SK-N-SH (cell line): ENCODE measurements at regions of chr4 and their contacts with region 1.

Region 1: GRCh38 chr4:15396157-15396800 is 31.6 kb upstream of the C1QTNF7 start:
- DNase-seq: peak; percentile 33
- H3K4me3 ChIP-seq: no peak overlapping the region; a peak in 1 of 4 replicates
- H3K27ac ChIP-seq: no peak overlapping the region
- H3K4me1 ChIP-seq: peaks cover 11 to 13% of the 10 kb centered on the region in 2 experiments; a peak in 2 of 4 replicates
- H3K27me3 ChIP-seq: no peaks in the 10 kb centered on the region
- CTCF ChIP-seq: peak; percentile 73
- EP300 ChIP-seq: no peak
- RAD21 ChIP-seq: peak; percentile 78

Region 2: DNA sequence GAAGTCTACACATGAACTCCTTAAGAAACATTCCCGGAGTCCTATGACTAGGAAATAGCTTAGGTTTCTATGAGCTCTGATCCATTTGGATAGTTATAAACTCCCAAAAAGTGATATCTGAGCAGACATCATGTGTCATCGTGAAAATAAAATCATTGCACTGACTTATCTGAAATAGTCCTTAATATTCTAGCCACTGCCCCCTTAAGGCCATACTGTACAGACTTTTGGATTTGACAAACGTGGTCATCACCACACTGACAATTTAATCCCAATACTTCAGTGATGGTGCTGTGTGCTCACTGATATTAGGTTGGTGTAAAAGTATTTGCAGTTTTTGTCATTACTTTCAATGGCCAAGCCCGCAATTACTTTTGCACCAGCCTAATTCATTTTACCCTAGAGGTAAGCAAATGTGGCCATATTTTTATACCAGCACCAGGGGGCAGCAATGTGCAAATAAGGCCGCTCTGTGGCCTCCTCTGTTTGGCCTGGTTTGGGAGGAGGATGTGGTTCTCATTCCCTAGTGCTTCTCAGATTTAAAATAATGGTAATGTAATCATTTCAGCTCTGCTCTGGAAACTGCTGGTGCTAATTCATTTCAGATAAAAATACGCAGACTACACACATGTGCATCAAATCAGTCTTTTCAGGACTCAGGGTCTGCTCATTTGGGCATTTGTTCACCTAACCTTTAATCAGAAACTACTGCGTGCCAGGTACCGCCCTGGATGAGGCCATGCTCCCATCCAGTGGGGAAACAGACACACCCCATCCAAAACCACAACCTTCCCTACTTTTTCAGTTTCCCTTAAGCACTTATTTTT is 164.8 kb before region 1 on chr4:
- CTCF ChIA-PET with region 1: interaction called, 34 read pairs
- POLR2A ChIA-PET with region 1: no interaction called
- DNase-seq: peak; percentile 77
- H3K4me3 ChIP-seq: no peak overlapping the region; a peak in 1 of 4 replicates
- H3K27ac ChIP-seq: peak overlapping the region in 1 of 2 experiments; percentile 74; a peak in 2 of 4 replicates
- H3K4me1 ChIP-seq: peaks cover 13 to 26% of the 10 kb centered on the region in 2 experiments
- H3K27me3 ChIP-seq: no peaks in the 10 kb centered on the region
- CTCF ChIP-seq: peak; percentile 86
- EP300 ChIP-seq: no peak; a peak in 1 of 4 replicates
- RAD21 ChIP-seq: peak; percentile 93

Region 3: DNA sequence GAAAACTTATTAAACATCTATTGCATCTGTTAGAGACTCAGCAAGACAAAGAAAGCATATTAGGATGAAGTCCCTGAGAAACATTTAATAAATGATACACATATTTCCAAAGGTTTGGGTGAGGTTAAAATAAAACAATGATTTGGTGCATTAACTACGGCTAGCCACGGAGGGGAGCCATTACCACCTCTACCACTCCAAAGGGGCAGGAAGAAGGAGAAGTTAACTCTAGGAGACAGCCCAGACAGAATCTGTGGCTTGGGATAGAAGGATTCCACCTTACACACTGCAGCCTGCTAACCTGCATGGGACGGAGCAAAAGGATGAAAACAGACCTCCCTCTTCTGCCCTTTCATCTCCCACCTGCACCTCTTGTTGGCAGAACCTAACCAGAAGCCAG is 157.6 kb before region 1 on chr4:
- CTCF ChIA-PET with region 1: interaction called, 34 read pairs
- POLR2A ChIA-PET with region 1: no interaction called
- DNase-seq: peak; percentile 65
- H3K4me3 ChIP-seq: no peak overlapping the region
- H3K27ac ChIP-seq: no peak overlapping the region
- H3K4me1 ChIP-seq: peaks cover 2 to 25% of the 10 kb centered on the region in 2 experiments; a peak in 3 of 4 replicates
- H3K27me3 ChIP-seq: no peaks in the 10 kb centered on the region
- CTCF ChIP-seq: peak; percentile 67
- EP300 ChIP-seq: no peak
- RAD21 ChIP-seq: peak; percentile 90

Region 4: GRCh38 chr4:15385928-15386327 is 10.4 kb before region 1 on chr4:
- CTCF ChIA-PET with region 1: interaction called, 21 read pairs
- POLR2A ChIA-PET with region 1: no interaction called
- DNase-seq: no peak
- H3K4me3 ChIP-seq: no peak overlapping the region
- H3K27ac ChIP-seq: no peak overlapping the region
- H3K4me1 ChIP-seq: peaks cover 0 to 15% of the 10 kb centered on the region in 2 experiments; a peak in 1 of 4 replicates
- H3K27me3 ChIP-seq: no peaks in the 10 kb centered on the region
- CTCF ChIP-seq: no peak
- EP300 ChIP-seq: no peak
- RAD21 ChIP-seq: no peak

Region 5: DNA sequence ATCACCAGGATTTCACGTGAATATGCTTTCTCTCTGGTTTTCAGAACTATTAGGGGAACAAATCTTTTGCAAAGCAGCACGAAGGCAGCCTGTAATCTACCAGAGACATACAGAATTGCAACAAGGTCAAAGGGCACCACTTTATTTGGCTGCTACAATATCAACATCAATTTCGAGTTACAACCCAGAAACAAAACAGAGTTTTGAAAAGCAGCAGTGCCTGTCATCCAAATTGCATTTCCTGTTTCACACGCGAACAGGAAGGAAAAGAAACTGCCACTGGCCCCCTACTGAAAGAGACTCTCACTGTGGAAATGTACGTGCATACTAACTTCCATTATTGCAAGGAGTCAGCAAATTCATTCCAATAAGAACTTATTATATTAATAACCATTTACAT is 14.5 kb after region 1 on chr4:
- CTCF ChIA-PET with region 1: interaction called, 20 read pairs
- POLR2A ChIA-PET with region 1: no interaction called
- DNase-seq: peak; percentile 23
- H3K4me3 ChIP-seq: no peak overlapping the region
- H3K27ac ChIP-seq: peak overlapping the region in 1 of 2 experiments; percentile 74; a peak in 2 of 4 replicates
- H3K4me1 ChIP-seq: peaks cover 12 to 15% of the 10 kb centered on the region in 2 experiments; a peak in 2 of 4 replicates
- H3K27me3 ChIP-seq: no peaks in the 10 kb centered on the region
- CTCF ChIP-seq: no peak
- EP300 ChIP-seq: peak in 1 of 2 experiments; percentile 77; a peak in 2 of 4 replicates
- RAD21 ChIP-seq: no peak; the same call in 1 of the 2 replicates